Activated T-helper 2 cell treated with anti-CD3 and anti-CD28 coated beads, Interferon-gamma antibody, Interleukin-2, Interleukin-4, amounts not matched to agents 10 μg/mL and 5 μg/mL and 100 μg/mL, durations not matched to agents 14 hours and 24 hours and 36 hours (primary cell): ENCODE measurements at regions of chr1 and their contacts with region 1.

Region 1: DNA sequence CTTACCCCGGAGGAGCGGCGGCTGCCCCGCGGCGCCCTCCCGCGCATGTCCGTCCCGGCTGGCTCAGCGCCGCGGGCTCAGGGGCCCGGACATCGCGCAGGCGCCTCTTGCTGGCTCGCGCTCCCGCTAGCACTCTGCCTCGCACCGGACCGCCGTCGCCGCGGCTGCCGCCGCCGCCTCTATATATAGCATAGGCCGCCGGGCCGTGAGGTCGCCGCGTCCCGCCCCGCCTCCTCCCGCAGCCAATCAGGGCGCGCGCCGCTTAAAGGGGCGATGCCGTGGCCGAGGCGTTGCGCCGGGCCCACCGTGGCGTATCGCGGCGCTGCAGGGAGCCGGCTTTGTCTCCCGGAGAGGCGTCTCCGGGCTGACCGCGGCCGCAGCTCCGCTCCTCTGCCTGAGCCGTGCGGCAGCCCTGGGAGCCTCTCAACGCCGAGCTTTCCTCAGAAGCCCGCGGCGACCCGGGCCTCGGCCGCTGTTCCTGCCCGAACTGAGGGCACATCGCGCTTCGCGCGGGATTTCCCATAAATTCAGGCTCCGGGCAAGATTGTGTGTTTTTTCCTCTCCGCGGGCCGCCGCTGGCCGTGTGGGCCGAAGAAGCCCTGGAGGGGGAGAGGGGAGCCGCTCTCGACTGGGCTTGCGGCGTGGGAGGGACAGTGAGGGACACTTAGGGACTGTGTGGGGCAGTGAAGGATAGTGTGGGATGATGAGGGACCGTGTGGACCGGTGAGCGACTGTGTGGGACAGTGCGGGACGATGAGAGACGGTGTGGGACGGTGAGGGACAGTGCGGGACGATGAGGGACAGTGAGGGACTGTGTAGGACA is at the start of gene ERRFI1:
- DNase-seq: peak; percentile 84
- H3K4me3 Mint-ChIP-seq: peak within 1 kb of the TSS; percentile 88
- H3K27ac Mint-ChIP-seq: peak within 1 kb of the TSS; percentile 24
- H3K4me1 Mint-ChIP-seq: peaks cover 11% of the 10 kb centered on the region
- H3K27me3 Mint-ChIP-seq: peaks cover 55% of the 10 kb centered on the region
- total RNA-seq, gene ERRFI1: 3.1 and 3.8 TPM in 2 replicates

Region 2: DNA sequence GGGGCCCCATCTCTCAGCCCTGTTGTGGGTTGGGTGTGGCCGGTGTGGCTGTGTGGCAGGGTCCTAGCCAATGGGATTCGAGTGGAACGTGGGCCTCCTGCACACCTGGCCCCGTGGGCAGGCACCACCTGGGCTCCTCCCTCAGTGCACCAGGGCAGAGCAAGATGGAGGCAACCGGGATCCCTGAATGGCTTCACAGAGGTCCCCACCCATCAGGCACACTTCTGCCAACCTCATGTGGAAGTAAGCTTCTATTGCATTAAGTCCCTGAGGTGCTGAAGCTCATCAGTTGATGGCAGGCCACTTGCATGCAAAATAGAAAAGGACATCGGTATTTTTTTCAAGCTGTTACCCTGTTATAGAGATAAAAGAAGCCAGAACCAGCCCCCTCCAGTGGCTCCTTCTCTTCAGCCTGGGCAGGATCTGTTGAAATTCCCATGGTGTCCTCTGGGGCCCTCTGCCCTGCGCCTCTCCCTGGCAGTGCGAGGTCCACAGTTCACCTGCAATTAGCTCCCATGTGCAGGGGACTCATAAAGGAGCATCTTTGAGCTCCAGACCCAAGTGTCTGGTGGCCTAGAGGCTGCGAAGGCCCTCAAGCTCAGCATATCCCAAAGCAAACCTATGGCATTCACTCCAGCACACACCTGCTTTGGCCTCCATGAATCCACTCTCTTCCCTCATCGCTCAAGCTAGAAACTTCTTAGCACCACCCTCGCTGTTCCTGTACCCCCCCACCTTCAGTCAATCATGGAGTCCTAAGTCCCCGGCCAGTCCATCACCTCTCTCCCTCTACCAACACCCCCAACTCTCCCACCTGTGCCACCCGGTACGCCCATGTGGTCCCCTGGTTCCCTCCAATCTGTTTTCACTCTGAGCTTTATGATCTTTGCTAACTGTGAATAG is 289.5 kb after region 1 on chr1:
- intact Hi-C with region 1: loop called (anchors 1 kb)
- DNase-seq: no peak
- H3K4me3 Mint-ChIP-seq: no peak overlapping the region
- H3K27ac Mint-ChIP-seq: no peak overlapping the region
- H3K4me1 Mint-ChIP-seq: peaks cover 12% of the 10 kb centered on the region
- H3K27me3 Mint-ChIP-seq: peaks cover 30% of the 10 kb centered on the region